ENCODE measurements at regions of chr1 and their contacts with region 1.

Region 1: DNA sequence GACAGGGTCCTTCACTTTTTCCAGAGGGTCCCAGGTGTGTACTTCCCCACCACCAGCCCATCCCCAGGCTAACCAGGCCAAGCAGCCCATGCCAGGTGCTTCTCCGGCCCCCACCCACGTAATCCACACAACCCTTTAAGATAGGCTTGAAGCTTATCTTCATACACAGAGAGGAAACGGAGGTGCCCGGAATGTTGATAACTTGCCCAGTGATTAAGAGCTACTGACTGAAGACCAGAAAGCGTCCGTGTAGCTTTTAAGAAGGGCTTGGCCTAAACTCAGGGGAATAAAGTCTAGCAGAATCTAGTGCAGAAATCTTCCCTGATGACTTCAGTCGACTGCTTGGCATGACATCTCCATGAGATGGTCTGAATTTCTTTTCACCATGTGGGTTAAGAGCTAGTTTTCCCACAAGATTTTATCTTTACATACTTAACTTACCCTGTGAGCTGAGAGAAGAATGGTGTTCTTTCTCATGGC is 138.7 kb downstream of the GALNT2 start:
- DNase-seq: no peak
- H3K4me3 ChIP-seq: no peak overlapping the region
- H3K27ac ChIP-seq: no peak overlapping the region
- H3K4me1 ChIP-seq: peaks cover 18% of the 10 kb centered on the region
- H3K27me3 ChIP-seq: no peaks in the 10 kb centered on the region
- CTCF ChIP-seq: no peak

Region 2: GRCh38 chr1:230084138-230084880 is 121.5 kb before region 1 on chr1:
- CTCF ChIA-PET with region 1: no interaction called
- POLR2A ChIA-PET with region 1: no interaction called
- intact Hi-C with region 1: loop called (anchors 2 kb)
- DNase-seq: peak; percentile 86 to 95
- H3K4me3 ChIP-seq: peak overlapping the region; percentile 4; the same call in 1 of the 2 replicates
- H3K27ac ChIP-seq: peak overlapping the region; percentile 85
- H3K4me1 ChIP-seq: peaks cover 48% of the 10 kb centered on the region
- H3K27me3 ChIP-seq: no peaks in the 10 kb centered on the region
- CTCF ChIP-seq: no peak

Region 3: DNA sequence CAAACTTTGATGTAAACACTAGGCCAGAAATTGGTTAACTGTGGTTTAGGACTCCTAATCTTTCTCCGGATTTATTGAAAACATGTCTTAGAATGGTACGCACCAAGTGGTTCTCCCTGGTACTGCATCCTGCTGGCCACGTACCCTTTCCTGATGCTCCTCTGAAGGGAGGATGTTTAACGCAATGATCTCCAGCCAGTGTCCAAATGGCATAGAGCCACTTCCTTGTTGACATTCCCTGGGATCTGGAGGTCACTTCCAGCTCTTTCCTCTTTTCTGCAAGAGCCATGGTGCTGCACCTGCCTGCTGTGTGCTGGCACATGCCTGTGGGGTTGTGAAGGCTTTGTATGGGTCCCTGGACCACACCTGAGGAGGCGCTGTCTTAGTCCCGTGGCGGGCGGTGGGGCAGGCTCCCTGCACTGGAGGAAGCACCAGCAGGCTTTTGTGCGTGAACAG is 84.8 kb before region 1 on chr1:
- CTCF ChIA-PET with region 1: no interaction called
- POLR2A ChIA-PET with region 1: no interaction called
- intact Hi-C with region 1: no loop called
- DNase-seq: no peak
- H3K4me3 ChIP-seq: no peak overlapping the region
- H3K27ac ChIP-seq: no peak overlapping the region
- H3K4me1 ChIP-seq: peaks cover 12% of the 10 kb centered on the region
- H3K27me3 ChIP-seq: no peaks in the 10 kb centered on the region
- CTCF ChIP-seq: peak; percentile 74

Region 4: GRCh38 chr1:230231774-230232145 is 26.0 kb after region 1 on chr1:
- CTCF ChIA-PET with region 1: interaction called, 3 read pairs
- POLR2A ChIA-PET with region 1: interaction called, 9 read pairs
- intact Hi-C with region 1: loop called (anchors 2 kb)
- DNase-seq: peak; percentile 46 to 73
- H3K4me3 ChIP-seq: no peak overlapping the region
- H3K27ac ChIP-seq: no peak overlapping the region
- H3K4me1 ChIP-seq: no peaks in the 10 kb centered on the region
- H3K27me3 ChIP-seq: no peaks in the 10 kb centered on the region
- CTCF ChIP-seq: no peak

Region 5: GRCh38 chr1:230268366-230269170 is 62.8 kb after region 1 on chr1:
- CTCF ChIA-PET with region 1: no interaction called
- POLR2A ChIA-PET with region 1: no interaction called
- intact Hi-C with region 1: no loop called
- DNase-seq: peak; percentile 48 to 50
- H3K4me3 ChIP-seq: no peak overlapping the region
- H3K27ac ChIP-seq: no peak overlapping the region
- H3K4me1 ChIP-seq: no peaks in the 10 kb centered on the region
- H3K27me3 ChIP-seq: no peaks in the 10 kb centered on the region
- CTCF ChIP-seq: peak; percentile 75

Measured in PC-9 (cell line).